ENCODE measurements at regions of chr1 and their contacts with region 1.

Region 1: DNA sequence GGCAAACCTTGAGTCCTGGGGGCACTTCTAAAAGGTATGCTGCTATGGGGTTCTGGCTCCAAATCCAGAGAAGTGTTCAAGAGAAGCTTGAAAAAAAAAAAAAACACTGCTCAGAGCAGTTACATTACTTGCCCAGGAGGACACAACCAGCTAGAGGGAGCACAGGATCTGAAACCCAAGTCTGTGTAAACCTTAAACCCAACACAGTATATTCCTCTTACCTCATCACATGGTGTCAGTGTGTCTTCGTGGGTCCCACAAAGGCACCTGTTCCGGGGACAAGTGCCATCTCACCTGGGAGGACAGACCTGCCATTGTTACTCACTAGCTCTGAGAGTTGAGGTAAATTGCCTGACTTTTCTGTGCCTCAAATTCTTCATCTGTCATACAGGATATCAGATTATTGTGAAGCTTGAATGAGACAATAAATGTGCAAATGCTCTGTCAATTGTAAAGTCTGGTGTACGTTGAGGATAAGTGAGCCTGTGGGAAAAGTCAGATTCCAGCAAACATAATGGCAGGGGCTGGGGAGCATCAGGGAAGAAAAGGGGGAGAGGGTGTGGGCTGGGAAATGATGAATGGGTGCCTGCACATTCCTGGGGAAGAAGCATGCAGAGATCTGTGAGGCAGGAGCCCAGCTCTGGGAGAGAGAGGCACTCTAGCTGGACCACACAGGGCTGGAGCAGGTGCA is 170.4 kb upstream of the ZC3H12A start:
- DNase-seq: no peak
- ATAC-seq: no peak
- H3K4me3 Mint-ChIP-seq: no peak overlapping the region
- H3K27ac Mint-ChIP-seq: no peak overlapping the region
- H3K4me1 Mint-ChIP-seq: no peaks in the 10 kb centered on the region
- H3K27me3 Mint-ChIP-seq: peaks cover 15% of the 10 kb centered on the region
- CTCF ChIP-seq: no peak

Region 2: GRCh38 chr1:37288900-37289299 is 15.1 kb before region 1 on chr1:
- CTCF ChIA-PET with region 1: no interaction called
- POLR2A ChIA-PET with region 1: interaction called, 3 read pairs
- intact Hi-C with region 1: loop called (anchors 2 kb)
- DNase-seq: peak; percentile 55
- ATAC-seq: peak; percentile 98
- H3K4me3 Mint-ChIP-seq: peak overlapping the region; percentile 64
- H3K27ac Mint-ChIP-seq: peak overlapping the region; percentile 97
- H3K4me1 Mint-ChIP-seq: peaks cover 61% of the 10 kb centered on the region
- H3K27me3 Mint-ChIP-seq: no peaks in the 10 kb centered on the region
- CTCF ChIP-seq: no peak

Measured in activated B cell treated with CpG ODN at 0.5 μM for 24 hours (primary cell).